ENCODE measurements at regions of chr3 and their contacts with region 1.

Region 1: DNA sequence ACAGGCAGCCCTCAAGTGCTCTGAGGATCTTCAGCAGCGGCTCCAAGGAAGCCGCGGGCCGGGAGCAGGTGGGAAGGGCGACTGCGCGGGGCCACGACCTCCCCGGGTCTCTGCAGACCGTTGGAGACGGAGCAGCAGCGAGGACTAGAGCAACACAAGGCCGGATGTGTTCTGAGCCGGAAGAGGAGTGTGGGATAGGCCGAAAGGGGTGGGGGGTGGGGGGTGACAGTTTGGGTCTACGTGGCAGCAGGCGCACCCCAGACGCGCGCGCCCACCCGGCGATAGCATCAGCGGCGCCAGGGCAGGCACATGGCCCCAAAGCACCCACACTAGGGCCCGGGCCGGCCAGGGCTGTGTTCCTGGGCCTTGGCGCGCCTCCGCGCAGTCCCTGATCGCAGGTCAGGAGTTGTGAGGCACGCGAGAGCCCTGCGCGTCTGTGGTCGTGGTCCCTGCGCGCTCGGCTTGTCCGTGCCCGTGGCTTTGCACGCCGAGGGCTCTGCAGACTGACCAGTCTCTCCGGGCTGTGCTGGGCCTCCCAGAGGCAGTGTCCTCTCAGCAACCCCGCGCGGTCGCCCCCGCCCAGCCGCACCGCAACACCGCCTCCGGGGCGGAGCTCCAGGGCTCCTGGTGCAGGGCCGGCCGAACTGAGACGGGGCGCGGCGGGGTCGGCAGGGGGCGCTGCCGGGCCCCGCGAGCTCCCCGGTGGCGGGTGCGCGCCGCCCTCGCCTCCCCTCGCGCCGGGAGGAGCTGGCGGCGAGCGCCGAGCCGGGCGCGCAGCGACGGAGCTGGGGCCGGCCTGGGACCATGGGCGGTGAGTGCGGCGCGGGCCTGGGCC is at the start of gene PXYLP1:
- DNase-seq: peak; percentile 95
- ATAC-seq: peak; percentile 92
- H3K4me3 Mint-ChIP-seq: peak within 1 kb of the TSS; percentile 94
- H3K27ac Mint-ChIP-seq: peak within 1 kb of the TSS; percentile 98
- H3K4me1 Mint-ChIP-seq: peaks cover 48% of the 10 kb centered on the region
- H3K27me3 Mint-ChIP-seq: no peaks in the 10 kb centered on the region
- total RNA-seq, gene PXYLP1: 10.3 to 12.2 TPM

Region 2: GRCh38 chr3:140859592-140860336 is 371.6 kb before region 1 on chr3:
- CTCF ChIA-PET with region 1: no interaction called
- POLR2A ChIA-PET with region 1: no interaction called
- intact Hi-C with region 1: no loop called
- DNase-seq: no peak
- ATAC-seq: no peak
- H3K4me3 Mint-ChIP-seq: no peak overlapping the region
- H3K27ac Mint-ChIP-seq: no peak overlapping the region
- H3K4me1 Mint-ChIP-seq: no peaks in the 10 kb centered on the region
- H3K27me3 Mint-ChIP-seq: peaks cover 3% of the 10 kb centered on the region

Region 3: GRCh38 chr3:140941434-140942220 is 289.7 kb before region 1 on chr3 and contains the start of gene SLC25A36:
- CTCF ChIA-PET with region 1: no interaction called
- POLR2A ChIA-PET with region 1: interaction called, 3 read pairs
- intact Hi-C with region 1: loop called in 1 of 2 experiments (anchors 1 kb)
- DNase-seq: peak; percentile 99
- ATAC-seq: peak; percentile 98
- H3K4me3 Mint-ChIP-seq: peak within 1 kb of the TSS; percentile 93
- H3K27ac Mint-ChIP-seq: peak within 1 kb of the TSS; percentile 95
- H3K4me1 Mint-ChIP-seq: peaks cover 37% of the 10 kb centered on the region
- H3K27me3 Mint-ChIP-seq: no peaks in the 10 kb centered on the region
- total RNA-seq, gene SLC25A36: 42.3 to 62.3 TPM

Region 4: DNA sequence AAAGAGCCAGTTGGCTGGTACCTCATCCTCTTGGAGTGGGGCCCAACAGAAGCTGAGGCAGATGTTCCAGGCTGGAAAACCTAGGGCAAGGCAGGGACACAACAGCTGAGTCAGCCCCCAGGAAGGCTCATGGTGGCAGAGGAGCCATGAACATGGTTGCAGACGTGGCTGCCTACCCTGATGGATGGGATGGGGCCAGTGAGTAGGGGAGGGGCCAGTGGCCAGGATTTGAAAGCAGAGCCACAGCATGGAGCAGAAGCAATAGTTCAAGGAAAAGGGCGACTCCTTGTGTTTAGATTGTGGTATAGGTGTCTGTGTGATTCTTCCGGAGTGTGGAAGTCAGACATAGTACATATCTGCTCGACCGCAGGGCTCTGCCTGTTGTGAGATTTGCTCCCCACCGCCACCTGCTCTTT is 24.5 kb after region 1 on chr3:
- CTCF ChIA-PET with region 1: interaction called, 42 read pairs
- POLR2A ChIA-PET with region 1: interaction called, 9 read pairs
- intact Hi-C with region 1: loop called (anchors 1 kb)
- DNase-seq: peak; percentile 72
- ATAC-seq: peak; percentile 92
- H3K4me3 Mint-ChIP-seq: no peak overlapping the region
- H3K27ac Mint-ChIP-seq: peak overlapping the region; percentile 38
- H3K4me1 Mint-ChIP-seq: peaks cover 52% of the 10 kb centered on the region
- H3K27me3 Mint-ChIP-seq: no peaks in the 10 kb centered on the region

Region 5: DNA sequence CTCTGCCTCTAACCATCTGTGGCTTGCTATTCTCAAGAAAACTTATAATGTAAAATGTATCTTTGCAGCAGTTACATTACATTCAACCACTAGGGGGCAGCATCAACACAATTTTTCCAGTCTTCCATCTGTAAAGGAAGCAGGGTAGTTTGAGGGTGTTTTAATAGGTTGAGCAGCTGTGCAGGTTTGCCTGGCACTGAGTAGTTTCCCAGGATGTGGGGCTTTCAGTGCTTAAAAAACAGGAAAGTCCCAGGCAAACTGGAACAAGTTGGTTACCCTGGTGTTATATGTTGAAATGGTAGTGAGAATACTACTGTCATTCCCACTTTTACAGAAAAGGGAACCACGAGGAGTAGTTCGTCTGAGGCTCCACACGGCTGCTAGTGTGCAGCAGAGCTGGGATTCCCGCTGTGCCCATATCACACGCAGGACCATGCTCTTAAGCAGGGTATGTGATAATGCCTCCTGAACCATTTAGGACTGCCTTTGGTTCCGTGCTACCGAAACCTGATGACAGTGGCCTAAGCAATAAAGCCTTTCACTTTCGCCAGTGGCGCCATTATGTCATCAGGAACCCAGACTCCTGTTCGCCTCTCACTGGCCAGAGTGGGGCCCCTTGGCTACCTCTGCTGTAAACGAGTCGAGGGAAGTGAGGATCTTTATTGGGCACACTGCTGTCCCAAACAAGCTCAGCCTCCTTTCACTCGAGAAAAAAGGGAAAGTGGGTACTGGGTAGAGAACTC is 72.3 kb after region 1 on chr3:
- CTCF ChIA-PET with region 1: interaction called, 16 read pairs
- POLR2A ChIA-PET with region 1: interaction called, 3 read pairs
- intact Hi-C with region 1: loop called in 1 of 2 experiments (anchors 2 kb)
- DNase-seq: peak; percentile 70
- ATAC-seq: peak; percentile 48
- H3K4me3 Mint-ChIP-seq: no peak overlapping the region
- H3K27ac Mint-ChIP-seq: no peak overlapping the region
- H3K4me1 Mint-ChIP-seq: peaks cover 51% of the 10 kb centered on the region
- H3K27me3 Mint-ChIP-seq: no peaks in the 10 kb centered on the region

Region 6: GRCh38 chr3:141796081-141796888 is 565.0 kb after region 1 on chr3:
- CTCF ChIA-PET with region 1: no interaction called
- POLR2A ChIA-PET with region 1: no interaction called
- intact Hi-C with region 1: loop called in 1 of 2 experiments (anchors 5 kb)
- DNase-seq: peak; percentile 90
- ATAC-seq: peak; percentile 84
- H3K4me3 Mint-ChIP-seq: peak overlapping the region; percentile 77
- H3K27ac Mint-ChIP-seq: peak overlapping the region; percentile 97
- H3K4me1 Mint-ChIP-seq: peaks cover 52% of the 10 kb centered on the region
- H3K27me3 Mint-ChIP-seq: no peaks in the 10 kb centered on the region